ENCODE measurements at regions of chr2 and their contacts with region 1.

Region 1: DNA sequence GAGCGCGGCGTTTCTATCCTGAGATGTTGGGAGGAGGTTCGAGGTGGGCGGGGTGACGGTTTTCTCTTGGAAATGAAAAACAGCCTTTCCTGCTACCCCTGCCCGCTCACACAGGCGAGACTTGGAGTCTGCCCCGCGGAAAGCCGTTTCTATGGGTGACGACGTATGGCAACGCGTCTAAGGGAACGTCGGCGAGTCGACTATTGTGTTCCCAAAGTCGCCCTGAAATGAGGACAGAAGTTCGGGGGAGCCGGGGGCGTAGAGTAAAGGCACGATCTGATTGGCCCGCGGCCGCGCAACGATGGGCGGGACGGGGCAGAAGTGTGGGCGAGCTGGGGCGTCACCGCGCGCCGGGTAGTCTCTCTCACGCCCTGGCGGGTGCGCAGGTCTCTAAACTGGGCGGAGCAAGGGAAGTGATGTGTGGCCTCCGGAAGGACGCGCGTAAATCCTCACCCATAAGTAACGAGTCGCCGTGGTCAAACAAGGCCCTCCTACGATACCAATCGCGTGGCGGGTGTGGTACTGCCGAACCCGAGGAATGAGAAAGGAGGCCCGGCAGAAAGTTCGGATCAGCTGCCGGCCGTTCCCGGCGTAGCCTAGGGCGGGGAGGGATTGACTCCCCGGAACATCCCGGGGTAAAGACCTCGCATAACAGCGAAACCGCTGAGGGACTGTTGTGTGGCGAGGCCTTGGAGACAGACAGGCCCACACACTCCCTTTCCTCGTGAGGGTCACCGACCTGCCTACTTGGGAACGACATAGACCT is 89.6 kb downstream of the FAM161A start:
- DNase-seq: peak; percentile 97 to 98 (median 98)
- H3K4me3 ChIP-seq: peak overlapping the region; percentile 81
- H3K27ac ChIP-seq: peak overlapping the region; percentile 97 to 100
- H3K4me1 ChIP-seq: no peaks in the 10 kb centered on the region
- H3K27me3 ChIP-seq: no peaks in the 10 kb centered on the region
- CTCF ChIP-seq: peak in 1 of 3 donors; percentile 7
- EP300 ChIP-seq: peak; percentile 13
- POLR2A ChIP-seq: peak; percentile 96

Region 2: GRCh38 chr2:61470965-61471904 is 293.0 kb before region 1 on chr2 and contains the start of gene USP34:
- intact Hi-C with region 1: loop called in 1 of 4 experiments (anchors 10 kb)
- DNase-seq: peak; percentile 93 to 95 (median 93)
- H3K4me3 ChIP-seq: peak within 1 kb of the TSS; percentile 57
- H3K27ac ChIP-seq: peak within 1 kb of the TSS; percentile 97
- H3K4me1 ChIP-seq: peaks cover 11% of the 10 kb centered on the region
- H3K27me3 ChIP-seq: no peaks in the 10 kb centered on the region
- CTCF ChIP-seq: no peak
- EP300 ChIP-seq: no peak
- POLR2A ChIP-seq: peak; percentile 88
- total RNA-seq, gene USP34: 85.8 to 132 (median 116) TPM

Measured in ovary (tissue), 10 donors.